Activated CD4-positive, alpha-beta memory T cell treated with anti-CD3 and anti-CD28 coated beads for 36 hours (primary cell): ENCODE measurements at regions of chr3 and their contacts with region 1.

Region 1: DNA sequence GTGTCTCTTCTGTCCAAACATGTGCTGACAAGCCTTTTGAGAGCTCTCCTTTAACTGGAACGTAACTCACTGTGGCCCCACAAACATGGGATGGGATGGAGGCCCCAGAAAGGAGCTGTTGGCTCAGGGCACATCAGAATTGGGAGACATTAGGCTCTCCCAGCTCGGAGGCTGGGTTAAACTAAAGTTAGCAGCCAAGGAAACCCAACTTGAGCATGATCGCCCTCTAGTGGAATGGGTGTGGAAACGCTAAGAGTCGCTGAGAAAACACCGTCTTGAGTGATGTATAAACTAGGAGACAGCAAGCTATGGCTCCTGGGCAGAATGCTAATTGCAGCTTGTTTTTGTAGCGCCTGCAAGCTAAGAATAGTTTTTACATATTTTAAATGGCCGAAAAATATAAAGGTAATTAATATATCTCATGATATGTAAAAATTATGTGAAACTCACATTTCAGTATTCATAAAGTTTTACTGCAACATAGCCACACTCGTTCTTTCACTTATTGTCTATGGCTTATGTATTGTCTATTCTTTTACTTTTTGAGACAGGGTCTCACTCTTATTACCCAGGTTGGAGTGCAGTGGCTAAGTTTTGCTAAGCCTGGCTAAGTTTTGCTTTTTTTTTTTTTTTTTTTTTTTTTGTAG is 138.8 kb upstream of the HACD2 start:
- DNase-seq: peak; percentile 60
- H3K4me3 Mint-ChIP-seq: no peak overlapping the region
- H3K27ac Mint-ChIP-seq: no peak overlapping the region
- H3K4me1 Mint-ChIP-seq: no peaks in the 10 kb centered on the region
- H3K27me3 Mint-ChIP-seq: peaks cover 6% of the 10 kb centered on the region

Region 2: DNA sequence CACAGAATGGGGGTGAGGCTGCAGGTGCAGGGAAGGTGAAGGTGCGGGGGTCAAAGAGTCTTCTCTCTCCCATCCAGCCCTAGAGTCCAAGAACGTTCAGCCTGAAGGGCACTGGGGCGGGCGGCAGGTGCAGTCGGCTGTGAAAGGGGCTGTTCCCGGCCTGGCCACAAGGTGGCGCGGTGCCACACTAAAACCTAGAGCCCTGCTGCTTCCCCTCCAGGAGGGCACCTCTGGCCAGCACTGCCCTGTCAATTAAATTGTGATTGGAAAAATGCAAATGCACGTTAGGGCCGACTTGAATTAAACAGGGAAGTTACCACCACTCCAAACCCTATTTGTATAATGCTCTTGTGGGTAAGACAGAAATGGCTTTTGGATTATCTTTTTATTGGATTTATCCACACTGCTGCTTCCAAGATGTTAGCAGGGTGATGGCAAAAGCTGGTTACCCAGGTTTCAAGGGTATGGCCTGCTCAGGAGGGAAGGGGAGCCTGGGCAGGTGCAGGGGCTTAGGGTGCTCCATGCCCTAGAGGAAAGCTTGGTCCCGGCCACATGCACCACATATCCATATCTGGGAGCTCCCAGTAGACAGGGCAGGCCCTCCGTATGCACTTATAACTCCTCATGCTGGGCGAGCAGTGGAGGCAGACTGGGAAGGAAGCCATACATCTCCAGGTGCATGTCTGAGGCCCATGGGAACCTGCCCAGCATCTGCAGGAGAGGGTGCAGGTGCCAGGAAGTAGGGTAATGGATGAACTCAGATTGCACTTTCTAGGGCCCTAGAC is 394.6 kb before region 1 on chr3:
- CTCF ChIA-PET with region 1: no interaction called
- POLR2A ChIA-PET with region 1: no interaction called
- intact Hi-C with region 1: loop called (anchors 10 kb)
- DNase-seq: peak; percentile 80
- H3K4me3 Mint-ChIP-seq: no peak overlapping the region
- H3K27ac Mint-ChIP-seq: no peak overlapping the region
- H3K4me1 Mint-ChIP-seq: no peaks in the 10 kb centered on the region
- H3K27me3 Mint-ChIP-seq: no peaks in the 10 kb centered on the region

Region 3: GRCh38 chr3:123642182-123642956 is 81.3 kb before region 1 on chr3:
- CTCF ChIA-PET with region 1: interaction called, 33 read pairs
- POLR2A ChIA-PET with region 1: no interaction called
- intact Hi-C with region 1: loop called (anchors 2 kb)
- DNase-seq: peak; percentile 77
- H3K4me3 Mint-ChIP-seq: no peak overlapping the region
- H3K27ac Mint-ChIP-seq: no peak overlapping the region
- H3K4me1 Mint-ChIP-seq: no peaks in the 10 kb centered on the region
- H3K27me3 Mint-ChIP-seq: no peaks in the 10 kb centered on the region

Region 4: GRCh38 chr3:123652346-123652984 is 71.2 kb before region 1 on chr3:
- CTCF ChIA-PET with region 1: interaction called, 21 read pairs
- POLR2A ChIA-PET with region 1: no interaction called
- intact Hi-C with region 1: no loop called
- DNase-seq: peak; percentile 55
- H3K4me3 Mint-ChIP-seq: no peak overlapping the region
- H3K27ac Mint-ChIP-seq: no peak overlapping the region
- H3K4me1 Mint-ChIP-seq: no peaks in the 10 kb centered on the region
- H3K27me3 Mint-ChIP-seq: peaks cover under 1% of the 10 kb centered on the region

Region 5: DNA sequence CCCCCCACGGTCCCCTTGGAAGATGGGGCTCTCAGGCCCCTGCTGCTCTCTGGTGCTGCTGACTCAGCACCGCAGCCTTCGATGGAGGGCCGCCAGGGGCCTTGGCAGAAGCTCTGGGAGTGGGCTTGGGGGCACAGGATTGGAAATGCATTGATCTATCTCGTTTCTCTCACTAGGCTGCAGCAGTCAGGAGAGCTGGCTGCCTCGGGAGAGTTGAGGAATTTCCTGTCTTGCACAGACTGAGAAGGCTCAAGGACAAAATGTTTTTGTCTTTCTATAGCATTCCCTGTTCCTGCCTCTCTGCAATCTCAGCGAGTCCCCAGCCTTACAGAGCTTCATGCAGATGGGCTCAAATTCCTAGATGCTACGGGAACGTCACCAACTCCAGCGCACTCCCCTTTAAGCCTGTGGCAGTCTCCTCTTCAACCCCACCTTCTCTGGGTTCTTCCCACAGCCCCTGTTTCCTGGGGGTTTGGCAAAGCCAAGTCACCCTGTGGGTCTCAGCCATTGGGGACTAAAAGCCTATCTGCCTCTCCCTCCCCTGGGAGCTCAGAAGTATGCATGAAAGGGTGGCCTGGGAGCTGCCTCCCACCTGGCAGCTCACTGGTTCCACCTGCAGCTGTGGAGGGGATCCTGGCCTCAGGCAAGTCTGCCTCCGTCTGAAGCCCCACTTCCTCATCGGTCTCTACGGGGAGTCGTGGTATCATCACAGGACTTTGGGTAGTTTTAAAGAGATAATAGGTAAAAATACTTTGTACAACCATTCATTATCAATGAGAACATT is 11.4 kb before region 1 on chr3:
- CTCF ChIA-PET with region 1: interaction called, 20 read pairs
- POLR2A ChIA-PET with region 1: no interaction called
- intact Hi-C with region 1: no loop called
- DNase-seq: no peak
- H3K4me3 Mint-ChIP-seq: no peak overlapping the region
- H3K27ac Mint-ChIP-seq: no peak overlapping the region
- H3K4me1 Mint-ChIP-seq: no peaks in the 10 kb centered on the region
- H3K27me3 Mint-ChIP-seq: no peaks in the 10 kb centered on the region

Region 6: DNA sequence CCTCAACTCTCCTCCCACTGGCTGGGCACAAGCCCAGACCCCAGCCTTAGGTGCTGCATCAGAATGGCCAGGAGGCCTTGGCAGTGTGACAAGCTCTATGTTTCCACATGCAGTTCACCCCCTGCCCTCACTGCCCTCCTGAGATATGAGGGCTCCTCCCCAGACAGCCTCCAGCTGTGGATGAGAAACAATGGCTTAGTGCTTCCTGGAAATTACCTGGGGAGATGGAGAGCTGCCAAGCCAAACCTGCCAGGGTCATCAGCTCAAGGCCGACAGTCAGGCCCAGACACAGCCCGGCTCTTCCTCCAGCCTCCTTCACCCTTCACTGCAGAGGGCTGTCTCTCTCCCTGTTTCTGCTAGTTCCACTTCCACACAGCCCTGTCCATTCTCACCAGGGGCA is 84.2 kb after region 1 on chr3:
- CTCF ChIA-PET with region 1: no interaction called
- POLR2A ChIA-PET with region 1: no interaction called
- intact Hi-C with region 1: no loop called
- DNase-seq: no peak
- H3K4me3 Mint-ChIP-seq: no peak overlapping the region
- H3K27ac Mint-ChIP-seq: no peak overlapping the region
- H3K4me1 Mint-ChIP-seq: no peaks in the 10 kb centered on the region
- H3K27me3 Mint-ChIP-seq: no peaks in the 10 kb centered on the region